Heart right ventricle (tissue), 16 donors: ENCODE measurements at regions of chr14 and their contacts with region 1.

Region 1: GRCh38 chr14:23446291-23446851 is 10.9 kb upstream of the MYH7 start:
- DNase-seq: peak in 1 of 2 donors; percentile 36
- ATAC-seq: peak in 7 of 8 donors; percentile 3 to 61 (median 22)
- H3K4me3 ChIP-seq: no peak overlapping the region
- H3K27ac ChIP-seq: peak overlapping the region in 6 of 10 donors; percentile 44 to 96 (median 76)
- H3K4me1 ChIP-seq: peaks cover 0 to 41% (median 7%) of the 10 kb centered on the region in 9 donors
- H3K27me3 ChIP-seq: peaks cover 0 to 4% (median 0%) of the 10 kb centered on the region in 7 donors
- CTCF ChIP-seq: peak in 6 of 9 donors; percentile 17 to 54 (median 42)

Region 2: DNA sequence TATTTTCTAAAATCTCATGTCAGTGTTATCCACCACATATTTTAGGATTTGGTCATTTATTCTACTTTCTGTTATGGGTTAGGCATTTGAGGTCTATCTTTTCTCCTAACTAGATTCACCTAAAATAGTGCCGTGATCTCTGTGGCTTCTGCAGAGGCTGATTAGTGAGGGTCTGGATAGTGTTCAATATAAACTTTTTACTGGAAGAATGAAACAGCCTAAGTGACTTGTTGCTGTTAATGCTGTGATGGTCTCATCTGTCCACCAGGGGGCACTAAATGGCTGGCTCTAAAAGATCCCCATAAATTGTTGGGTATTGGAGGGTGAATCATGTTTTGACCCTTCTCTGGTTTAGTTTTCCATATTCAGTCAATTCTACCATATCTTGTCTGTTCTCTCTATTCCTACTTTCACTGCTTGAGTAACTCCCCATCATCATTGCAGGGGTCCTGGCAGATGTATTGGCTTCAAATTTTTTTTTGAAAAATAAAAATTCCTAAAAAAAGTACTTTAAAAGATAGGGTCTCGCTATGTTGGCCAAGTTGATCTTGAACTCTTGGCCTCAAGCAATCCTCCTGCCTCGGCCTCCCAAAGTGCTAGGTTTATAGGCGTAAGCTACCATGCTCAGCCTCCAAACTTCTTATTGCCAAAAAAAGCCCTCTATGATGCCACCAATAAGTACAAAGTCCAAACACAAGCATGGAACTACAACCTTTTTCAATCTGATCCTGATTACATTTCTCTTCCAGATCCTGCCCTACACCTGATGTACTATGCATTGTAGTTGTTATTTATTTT is 118.2 kb before region 1 on chr14:
- intact Hi-C with region 1: loop called in 6 of 10 experiments (anchors 2 to 5 kb)
- DNase-seq: peak in 1 of 2 donors; percentile 73
- ATAC-seq: peak in 7 of 8 donors; percentile 55 to 78 (median 68)
- H3K4me3 ChIP-seq: no peak overlapping the region
- H3K27ac ChIP-seq: no peak overlapping the region
- H3K4me1 ChIP-seq: peaks cover 0 to 10% (median 6%) of the 10 kb centered on the region in 9 donors
- H3K27me3 ChIP-seq: peaks cover 0 to 1% (median 0%) of the 10 kb centered on the region in 7 donors
- CTCF ChIP-seq: peak; percentile 80 to 94 (median 88)

Region 3: DNA sequence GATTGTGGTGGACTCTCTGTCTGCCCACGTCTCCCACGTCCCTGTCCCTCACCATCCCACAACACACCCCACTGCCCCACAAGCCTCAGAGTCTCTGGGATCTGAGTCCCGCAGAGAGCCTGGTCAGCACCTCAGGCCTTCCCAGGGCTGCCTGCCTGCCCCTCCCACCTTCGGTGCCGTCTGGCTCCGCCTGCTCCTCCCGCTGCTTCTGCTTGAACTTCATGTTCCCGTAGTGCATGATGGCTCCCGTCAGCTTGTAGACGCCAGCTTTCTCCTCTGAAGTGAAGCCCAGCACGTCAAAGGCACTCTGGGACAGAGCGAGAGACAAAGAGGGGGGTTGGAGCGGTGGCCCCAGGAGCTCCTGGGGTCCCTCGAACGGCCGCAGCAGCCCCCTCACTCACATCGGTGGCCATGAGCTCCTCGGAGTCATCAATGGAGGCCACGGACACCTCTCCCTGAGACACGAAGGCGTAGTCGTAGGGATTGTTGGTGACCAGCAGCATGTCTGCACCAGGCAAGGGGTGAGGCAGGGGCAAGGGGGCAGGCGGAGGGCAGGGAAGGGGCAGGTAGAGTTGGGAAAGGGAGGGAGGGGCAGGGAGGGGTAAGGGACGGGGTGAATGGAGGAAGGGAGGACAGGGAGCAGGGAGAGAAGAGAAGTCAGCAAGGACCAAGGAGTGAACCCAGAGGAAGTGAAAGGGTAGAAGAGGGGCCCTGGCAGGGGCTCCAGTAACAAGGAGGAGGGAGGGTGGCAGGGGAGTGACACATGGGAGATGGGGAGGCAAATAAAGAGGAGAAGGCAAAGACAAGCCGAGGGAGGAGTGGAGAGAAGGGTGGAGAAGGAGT is 43.9 kb before region 1 on chr14:
- intact Hi-C with region 1: loop called in 2 of 10 experiments (anchors 5 to 10 kb)
- DNase-seq: no peak
- ATAC-seq: peak in 2 of 8 donors; percentile 1 to 15
- H3K4me3 ChIP-seq: peak overlapping the region in 1 of 10 donors; percentile 10
- H3K27ac ChIP-seq: peak overlapping the region in 4 of 10 donors; percentile 19 to 48 (median 29)
- H3K4me1 ChIP-seq: peaks cover 0 to 28% (median 0%) of the 10 kb centered on the region in 9 donors
- H3K27me3 ChIP-seq: peaks cover 0 to 10% (median 0%) of the 10 kb centered on the region in 7 donors
- CTCF ChIP-seq: no peak

Region 4: GRCh38 chr14:23409475-23409874 is 36.9 kb before region 1 on chr14:
- intact Hi-C with region 1: loop called in 3 of 10 experiments (anchors 2 to 5 kb)
- DNase-seq: no peak
- ATAC-seq: peak; percentile 5 to 70 (median 36)
- H3K4me3 ChIP-seq: no peak overlapping the region
- H3K27ac ChIP-seq: peak overlapping the region in 9 of 10 donors; percentile 46 to 87 (median 75)
- H3K4me1 ChIP-seq: peaks cover 0 to 51% (median 7%) of the 10 kb centered on the region in 9 donors
- H3K27me3 ChIP-seq: peaks cover 0 to 10% (median 0%) of the 10 kb centered on the region in 7 donors
- CTCF ChIP-seq: no peak